Posterior vena cava (tissue), 2 donors: ENCODE measurements at regions of chr1 and their contacts with region 1.

Region 1: GRCh38 chr1:46616277-46617107 is at the start of gene MOB3C:
- DNase-seq: peak; percentile 96
- total RNA-seq, gene MOB3C: 18.4 to 21.4 TPM

Region 2: DNA sequence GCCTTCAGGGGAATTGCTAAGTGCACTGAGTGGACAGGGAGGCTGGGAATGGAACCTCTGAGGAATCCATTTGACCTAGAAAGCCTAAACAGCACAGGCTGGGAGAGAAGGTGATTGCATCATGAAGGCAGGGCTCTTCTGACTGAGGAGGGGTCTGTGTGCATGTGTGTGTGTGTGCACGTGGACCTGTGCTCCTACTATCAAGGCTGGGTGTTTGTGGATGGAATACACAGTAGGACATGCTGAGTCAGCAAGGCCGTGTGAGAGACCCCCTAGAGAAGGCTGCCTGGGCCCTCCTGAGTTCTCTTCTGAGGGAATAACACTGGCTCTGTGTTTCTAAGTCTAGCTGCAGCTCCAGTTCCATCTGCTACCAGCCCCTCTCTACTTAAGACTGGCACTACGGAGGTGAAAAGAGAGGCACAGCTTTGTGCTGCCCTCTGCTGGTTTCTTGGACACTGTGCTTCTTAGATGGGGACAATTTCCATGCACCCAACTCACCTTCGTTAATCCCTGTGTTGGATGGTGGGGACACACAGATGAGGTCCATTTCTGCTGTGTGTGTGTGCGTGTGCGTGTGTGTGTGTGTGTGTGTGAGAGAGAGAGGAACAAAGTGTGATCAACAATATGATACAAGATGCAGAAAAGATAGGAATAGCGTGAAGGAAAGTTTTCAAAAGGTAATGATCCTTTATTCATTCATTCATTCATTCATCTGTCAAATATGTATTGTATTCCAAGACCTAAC is 108.7 kb after region 1 on chr1:
- intact Hi-C with region 1: loop called in 1 of 2 experiments (anchors 5 kb)
- DNase-seq: peak; percentile 88